ENCODE measurements at regions of chr14 and their contacts with region 1.

Region 1: DNA sequence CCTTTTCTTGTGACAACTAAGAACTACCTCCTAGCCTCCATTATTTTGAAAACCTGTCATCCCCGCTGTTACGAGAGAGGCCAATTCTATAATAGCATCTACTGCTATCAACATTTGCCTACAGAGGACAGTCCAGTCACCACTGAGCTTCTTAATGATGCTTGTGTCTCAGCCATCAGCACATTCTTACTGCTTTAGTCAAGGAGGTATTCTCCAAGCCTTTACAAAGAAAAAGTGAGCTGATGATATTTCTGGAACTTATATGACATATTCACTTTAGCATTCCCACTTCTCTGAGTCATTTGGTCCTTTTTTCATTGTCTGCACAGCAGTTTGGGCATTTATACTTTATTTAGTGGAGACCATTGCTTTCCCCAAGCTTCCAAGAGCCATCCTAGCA is 497.7 kb upstream of the RPL10L start:
- DNase-seq: no peak

Region 2: GRCh38 chr14:46108228-46108627 is 1041.1 kb before region 1 on chr14:
- intact Hi-C with region 1: loop called in 1 of 2 experiments (anchors 5 kb)
- DNase-seq: no peak